AG04449 (cell line): ENCODE measurements at regions of chr1 and their contacts with region 1.

Region 1: GRCh38 chr1:53878492-53879105 is 11.0 kb downstream of the YIPF1 start:
- DNase-seq: no peak
- H3K4me3 ChIP-seq: no peak overlapping the region
- CTCF ChIP-seq: peak; percentile 46

Region 2: GRCh38 chr1:53644909-53645689 is 233.5 kb before region 1 on chr1:
- CTCF ChIA-PET with region 1: no interaction called
- POLR2A ChIA-PET with region 1: no interaction called
- DNase-seq: no peak
- H3K4me3 ChIP-seq: no peak overlapping the region
- CTCF ChIP-seq: no peak

Region 3: DNA sequence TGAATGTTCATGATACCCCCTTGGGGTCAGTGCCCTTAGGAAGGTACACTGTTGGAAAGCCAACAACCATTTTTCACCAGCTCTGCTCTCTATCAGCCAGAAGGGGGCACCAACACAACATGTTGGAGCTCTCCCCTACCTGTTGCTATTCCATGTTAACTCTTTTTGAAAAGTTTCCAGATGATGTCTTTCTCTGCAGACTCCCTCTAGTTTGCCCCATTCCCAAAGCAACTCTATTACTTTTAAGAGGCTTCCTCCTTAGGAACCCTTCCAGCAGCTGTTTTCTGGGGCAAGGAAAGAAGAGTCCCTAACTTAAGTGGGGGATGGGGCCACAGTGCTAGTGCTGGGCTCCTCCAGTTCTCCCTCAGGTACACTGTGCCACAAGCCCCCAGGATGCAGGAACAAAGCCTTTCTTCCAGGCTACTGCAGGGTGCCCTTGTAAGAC is 17.6 kb before region 1 on chr1:
- CTCF ChIA-PET with region 1: interaction called, 52 read pairs
- POLR2A ChIA-PET with region 1: interaction called, 3 read pairs
- DNase-seq: no peak
- H3K4me3 ChIP-seq: no peak overlapping the region
- CTCF ChIP-seq: peak; percentile 74

Region 4: GRCh38 chr1:53945433-53946251 is 67.0 kb after region 1 on chr1 and contains the start of gene IFT25:
- CTCF ChIA-PET with region 1: interaction called, 115 read pairs
- POLR2A ChIA-PET with region 1: no interaction called
- DNase-seq: peak; percentile 74
- H3K4me3 ChIP-seq: peak within 1 kb of the TSS; percentile 97
- CTCF ChIP-seq: no peak

Region 5: DNA sequence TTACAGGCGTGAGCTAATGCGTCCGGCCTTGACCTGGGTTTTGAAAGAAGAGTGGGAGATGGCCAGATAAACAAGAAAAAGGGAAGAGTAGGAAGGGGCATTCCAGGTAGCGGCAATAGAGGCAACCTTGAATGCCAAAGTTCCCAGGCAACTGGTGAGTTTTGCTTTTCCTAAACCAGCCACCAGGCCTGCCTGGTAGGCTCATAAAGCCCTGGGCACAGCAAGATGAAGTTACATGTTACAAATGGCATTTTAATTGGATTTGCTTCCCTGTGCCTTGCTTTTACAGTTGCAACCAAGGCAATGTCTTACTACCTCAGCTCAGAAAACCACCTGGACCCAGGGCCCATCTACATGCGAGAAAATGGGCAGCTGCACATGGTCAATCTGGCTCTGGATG is 73.1 kb after region 1 on chr1:
- CTCF ChIA-PET with region 1: interaction called, 115 read pairs
- POLR2A ChIA-PET with region 1: no interaction called
- DNase-seq: no peak
- H3K4me3 ChIP-seq: no peak overlapping the region
- CTCF ChIP-seq: no peak

Region 6: GRCh38 chr1:53959664-53960250 is 81.2 kb after region 1 on chr1:
- CTCF ChIA-PET with region 1: interaction called, 70 read pairs
- POLR2A ChIA-PET with region 1: no interaction called
- DNase-seq: no peak
- H3K4me3 ChIP-seq: no peak overlapping the region
- CTCF ChIP-seq: peak; percentile 30

Region 7: GRCh38 chr1:53968125-53968513 is 89.5 kb after region 1 on chr1:
- CTCF ChIA-PET with region 1: interaction called, 11 read pairs
- POLR2A ChIA-PET with region 1: no interaction called
- DNase-seq: no peak
- H3K4me3 ChIP-seq: no peak overlapping the region
- CTCF ChIP-seq: no peak